ENCODE measurements at regions of chr3 and their contacts with region 1.

Region 1: GRCh38 chr3:157532529-157533297 is 29.5 kb upstream of the VEPH1 start:
- DNase-seq: no peak
- H3K4me3 ChIP-seq: no peak overlapping the region
- H3K27ac ChIP-seq: no peak overlapping the region
- H3K4me1 ChIP-seq: peaks cover 0 to 3% (median 1%) of the 10 kb centered on the region in 4 donors
- H3K27me3 ChIP-seq: no peaks in the 10 kb centered on the region
- CTCF ChIP-seq: peak; percentile 69 to 77 (median 72)
- EP300 ChIP-seq: no peak
- POLR2A ChIP-seq: no peak

Region 2: DNA sequence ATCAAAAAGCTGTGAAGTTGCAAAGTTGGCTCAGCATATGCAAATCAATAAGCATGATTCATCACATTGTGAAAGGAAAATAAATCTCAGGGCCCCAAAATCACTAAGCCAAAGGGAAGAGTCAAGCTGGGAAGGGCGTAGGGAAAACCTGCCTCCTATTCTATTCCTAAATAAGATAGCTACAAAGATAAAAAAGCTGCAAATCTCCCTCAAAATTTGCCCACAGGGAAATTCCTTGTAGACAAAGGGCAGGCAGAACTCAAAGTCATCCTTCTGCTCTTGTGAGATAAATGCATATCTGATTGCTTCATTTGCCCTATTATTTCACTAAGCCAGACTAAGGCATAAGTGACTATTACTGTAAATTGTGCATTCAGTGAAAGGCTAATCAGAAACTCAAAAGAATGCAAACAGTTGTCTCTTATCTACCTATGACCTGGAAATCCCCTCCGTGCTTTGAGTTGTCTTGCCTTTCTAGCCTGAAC is 342.3 kb before region 1 on chr3:
- in situ Hi-C with region 1: no loop called
- intact Hi-C with region 1: no loop called
- DNase-seq: no peak
- H3K4me3 ChIP-seq: no peak overlapping the region
- H3K27ac ChIP-seq: no peak overlapping the region
- H3K4me1 ChIP-seq: no peaks in the 10 kb centered on the region
- H3K27me3 ChIP-seq: no peaks in the 10 kb centered on the region
- CTCF ChIP-seq: no peak
- EP300 ChIP-seq: no peak
- POLR2A ChIP-seq: no peak

Region 3: GRCh38 chr3:157572559-157573270 is 40.0 kb after region 1 on chr3:
- in situ Hi-C with region 1: no loop called
- intact Hi-C with region 1: loop called (anchors 2 kb)
- DNase-seq: peak; percentile 14
- H3K4me3 ChIP-seq: no peak overlapping the region
- H3K27ac ChIP-seq: no peak overlapping the region
- H3K4me1 ChIP-seq: no peaks in the 10 kb centered on the region
- H3K27me3 ChIP-seq: no peaks in the 10 kb centered on the region
- CTCF ChIP-seq: peak; percentile 64 to 76 (median 72)
- EP300 ChIP-seq: no peak
- POLR2A ChIP-seq: no peak